ENCODE measurements at regions of chr7 and their contacts with region 1.

Region 1: DNA sequence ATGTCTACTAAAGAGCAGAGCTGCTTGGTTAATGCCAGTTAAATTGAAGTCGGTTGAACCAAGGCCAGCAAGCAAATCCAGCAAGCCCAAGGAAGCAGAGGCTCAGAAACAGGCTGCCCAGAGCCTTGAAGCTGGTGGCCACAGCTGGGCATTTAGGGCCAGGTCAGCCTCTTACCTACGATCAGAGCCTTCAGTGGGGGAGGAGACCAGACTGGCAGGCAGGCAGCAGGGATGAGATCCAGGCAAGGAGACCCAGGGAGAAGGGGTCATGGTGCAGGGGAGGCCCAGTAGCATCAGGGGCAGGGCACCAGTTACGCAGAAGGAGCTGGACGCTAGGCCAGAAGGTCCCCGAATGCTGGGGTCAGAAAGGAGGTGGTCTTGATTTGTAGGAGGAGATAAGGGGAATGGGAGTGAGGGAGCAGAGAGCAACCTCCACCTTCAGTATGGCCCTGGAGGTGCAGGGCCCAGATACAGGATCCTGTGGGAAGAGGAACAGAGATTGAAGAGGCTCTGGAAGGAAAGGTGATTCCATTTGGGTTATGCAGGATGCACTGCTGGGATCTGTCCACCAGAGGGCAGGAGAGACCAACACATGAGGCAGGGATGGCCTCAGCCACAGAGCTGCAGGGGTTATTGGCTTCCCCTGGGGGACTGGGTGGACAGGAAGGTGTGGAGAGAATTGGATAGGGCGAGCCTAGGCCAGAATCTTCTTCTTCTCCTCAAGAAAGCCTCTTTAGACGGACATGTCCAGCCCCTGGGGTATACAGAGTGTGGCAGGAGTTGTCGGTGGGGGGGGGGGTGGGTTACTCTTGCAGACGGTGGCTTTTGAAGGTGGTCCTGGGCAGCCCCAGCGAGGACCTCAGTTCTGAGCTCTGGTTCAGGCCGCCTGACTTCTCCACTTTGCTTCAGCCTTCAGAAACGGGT is 132.6 kb upstream of the PODXL start:
- DNase-seq: peak; percentile 49
- ATAC-seq: peak; percentile 97
- H3K4me3 ChIP-seq: no peak overlapping the region
- H3K27ac ChIP-seq: no peak overlapping the region
- H3K4me1 ChIP-seq: no peaks in the 10 kb centered on the region
- H3K27me3 ChIP-seq: peaks cover 40% of the 10 kb centered on the region
- CTCF ChIP-seq: peak; percentile 89
- POLR2A ChIP-seq: no peak
- RAD21 ChIP-seq: peak; percentile 89

Region 2: GRCh38 chr7:131699323-131699722 is 10.3 kb after region 1 on chr7:
- CTCF ChIA-PET with region 1: interaction called, 14 read pairs
- POLR2A ChIA-PET with region 1: no interaction called
- dilution Hi-C with region 1: no loop called
- in situ Hi-C with region 1: no loop called
- intact Hi-C with region 1: no loop called
- DNase-seq: no peak
- ATAC-seq: no peak
- H3K4me3 ChIP-seq: no peak overlapping the region
- H3K27ac ChIP-seq: no peak overlapping the region
- H3K4me1 ChIP-seq: no peaks in the 10 kb centered on the region
- H3K27me3 ChIP-seq: peaks cover 6% of the 10 kb centered on the region
- CTCF ChIP-seq: no peak
- POLR2A ChIP-seq: no peak
- RAD21 ChIP-seq: no peak

Region 3: DNA sequence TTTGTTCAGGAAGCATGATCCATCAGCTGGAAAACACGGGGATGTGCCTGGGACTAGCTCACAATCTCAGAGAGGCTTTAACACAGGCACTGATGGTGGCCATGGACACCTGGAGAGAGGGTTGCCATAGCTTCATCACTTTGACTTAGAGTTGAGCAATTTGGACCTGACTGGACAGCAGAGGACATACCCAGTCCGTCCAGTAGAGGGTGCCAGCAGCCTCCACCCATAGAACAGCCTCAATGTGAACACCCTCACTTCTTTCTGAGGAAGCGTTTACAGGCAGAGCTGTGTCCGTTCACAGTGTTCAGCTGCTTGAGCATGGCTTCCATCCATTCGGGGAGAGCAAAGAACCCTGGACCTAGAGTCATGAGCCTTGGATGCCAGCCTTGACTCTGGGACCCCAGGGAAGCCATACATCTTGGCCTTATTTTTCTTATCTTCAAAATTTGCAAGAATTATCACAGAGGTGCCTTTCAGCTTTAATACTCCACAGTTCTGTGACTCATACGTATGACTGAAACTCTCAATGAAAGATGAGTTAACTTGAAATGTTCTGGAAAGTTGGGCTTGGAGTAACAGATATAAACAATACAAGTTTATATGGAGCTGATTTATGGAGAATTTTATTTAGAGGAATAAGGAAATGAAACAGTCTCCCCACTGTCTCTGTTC is 170.3 kb after region 1 on chr7:
- CTCF ChIA-PET with region 1: no interaction called
- POLR2A ChIA-PET with region 1: no interaction called
- dilution Hi-C with region 1: no loop called
- in situ Hi-C with region 1: no loop called
- intact Hi-C with region 1: loop called (anchors 2 kb)
- DNase-seq: peak; percentile 62
- ATAC-seq: peak; percentile 99
- H3K4me3 ChIP-seq: no peak overlapping the region
- H3K27ac ChIP-seq: no peak overlapping the region
- H3K4me1 ChIP-seq: no peaks in the 10 kb centered on the region
- H3K27me3 ChIP-seq: peaks cover 2% of the 10 kb centered on the region; the same call in 1 of the 2 replicates
- CTCF ChIP-seq: peak; percentile 75
- POLR2A ChIP-seq: no peak
- RAD21 ChIP-seq: peak; percentile 62

Region 4: DNA sequence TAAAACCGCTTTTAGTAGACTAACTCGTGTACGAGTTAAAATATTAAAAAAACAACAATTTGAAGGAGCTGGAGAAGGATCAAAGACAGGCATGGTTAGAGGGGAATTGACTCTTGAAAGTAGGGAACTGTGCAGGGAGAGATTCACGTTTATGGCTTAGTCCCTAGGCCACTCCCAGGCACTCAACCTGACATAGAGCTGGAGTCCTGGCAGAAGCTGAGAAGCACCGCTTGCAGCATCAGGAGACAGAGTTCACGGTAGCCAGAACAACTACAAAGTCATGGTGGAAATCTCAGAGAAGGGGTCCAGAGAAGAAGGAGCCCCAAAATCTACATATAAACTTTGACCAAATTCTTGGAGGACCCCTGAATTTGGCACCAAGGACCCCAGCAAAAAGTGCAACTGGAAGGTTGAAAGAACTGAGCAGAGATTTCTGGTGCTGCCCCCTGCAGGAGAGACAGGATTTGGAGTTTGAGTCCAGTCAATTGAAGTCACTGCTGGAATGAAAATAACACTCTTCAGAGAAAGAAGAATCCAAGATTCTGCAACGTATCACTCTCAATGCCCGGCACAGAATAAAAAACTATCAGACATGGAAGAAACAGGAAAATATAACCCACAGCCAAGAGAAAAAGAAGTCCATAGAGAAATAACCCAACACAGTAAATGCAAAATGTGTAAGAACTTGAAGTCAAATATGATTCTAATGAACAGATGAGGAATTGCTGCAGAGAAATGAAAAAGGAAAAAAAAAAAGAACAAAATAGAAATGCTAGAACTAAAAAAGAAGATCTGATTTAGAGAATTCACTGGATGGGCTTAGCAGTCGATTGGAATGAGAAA is 360.7 kb after region 1 on chr7:
- CTCF ChIA-PET with region 1: no interaction called
- POLR2A ChIA-PET with region 1: no interaction called
- dilution Hi-C with region 1: no loop called
- in situ Hi-C with region 1: no loop called
- intact Hi-C with region 1: loop called (anchors 10 kb)
- DNase-seq: peak; percentile 17
- ATAC-seq: no peak
- H3K4me3 ChIP-seq: no peak overlapping the region
- H3K27ac ChIP-seq: no peak overlapping the region
- H3K4me1 ChIP-seq: no peaks in the 10 kb centered on the region; the same call in 1 of the 2 replicates
- H3K27me3 ChIP-seq: peaks cover 11% of the 10 kb centered on the region
- CTCF ChIP-seq: peak; percentile 49
- POLR2A ChIP-seq: no peak
- RAD21 ChIP-seq: no peak

Region 5: GRCh38 chr7:132250883-132251653 is 562.1 kb after region 1 on chr7:
- CTCF ChIA-PET with region 1: no interaction called
- POLR2A ChIA-PET with region 1: no interaction called
- dilution Hi-C with region 1: no loop called
- in situ Hi-C with region 1: no loop called
- intact Hi-C with region 1: loop called (anchors 10 kb)
- DNase-seq: no peak
- ATAC-seq: no peak
- H3K4me3 ChIP-seq: no peak overlapping the region
- H3K27ac ChIP-seq: no peak overlapping the region
- H3K4me1 ChIP-seq: no peaks in the 10 kb centered on the region
- H3K27me3 ChIP-seq: no peaks in the 10 kb centered on the region
- CTCF ChIP-seq: no peak
- POLR2A ChIP-seq: no peak
- RAD21 ChIP-seq: no peak

Measured in IMR-90 (cell line).